HAP-1 (cell line): ENCODE measurements at regions of chr6 and their contacts with region 1.

Region 1: GRCh38 chr6:129606664-129607063 is 103.3 kb downstream of the ARHGAP18 start:
- DNase-seq: no peak
- H3K4me3 ChIP-seq: no peak overlapping the region
- H3K4me1 ChIP-seq: peaks cover 6% of the 10 kb centered on the region; the same call in 1 of the 2 replicates
- H3K27me3 ChIP-seq: no peaks in the 10 kb centered on the region

Region 2: GRCh38 chr6:129370268-129370916 is 236.3 kb before region 1 on chr6:
- in situ Hi-C with region 1: no loop called
- DNase-seq: peak; percentile 81 to 97
- H3K4me3 ChIP-seq: no peak overlapping the region
- H3K4me1 ChIP-seq: peaks cover 16% of the 10 kb centered on the region
- H3K27me3 ChIP-seq: no peaks in the 10 kb centered on the region

Region 3: DNA sequence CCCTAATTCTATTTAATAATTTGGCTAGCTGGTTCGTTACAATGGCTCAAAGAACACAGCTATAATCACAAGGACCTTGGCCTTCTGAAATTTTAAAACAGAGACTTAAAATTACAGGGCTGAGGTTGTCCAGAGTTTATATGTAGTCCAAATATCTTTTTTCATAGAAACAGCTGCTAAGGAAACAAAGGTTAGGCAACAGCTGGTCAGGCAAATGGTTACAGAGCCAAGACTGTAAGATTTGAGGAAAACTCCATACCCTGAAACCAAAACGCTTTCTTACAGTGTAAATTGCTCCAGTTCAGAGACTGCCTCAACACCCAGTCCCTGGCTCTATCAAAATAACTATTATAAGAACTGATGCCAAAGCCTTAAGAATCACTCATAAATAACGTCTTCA is 113.0 kb after region 1 on chr6:
- in situ Hi-C with region 1: loop called (anchors 10 kb)
- DNase-seq: no peak
- H3K4me3 ChIP-seq: no peak overlapping the region
- H3K4me1 ChIP-seq: peaks cover 3% of the 10 kb centered on the region; the same call in 1 of the 2 replicates
- H3K27me3 ChIP-seq: no peaks in the 10 kb centered on the region